ENCODE measurements at regions of chr6 and their contacts with region 1.

Region 1: GRCh38 chr6:26234421-26235296 is 130.3 kb upstream of the BTN3A2 start:
- DNase-seq: peak; percentile 49
- ATAC-seq: peak; percentile 77
- H3K4me3 Mint-ChIP-seq: peak overlapping the region; percentile 89
- H3K27ac Mint-ChIP-seq: peak overlapping the region; percentile 97
- H3K4me1 Mint-ChIP-seq: peaks cover 26% of the 10 kb centered on the region
- H3K27me3 Mint-ChIP-seq: no peaks in the 10 kb centered on the region
- CTCF ChIP-seq: no peak

Region 2: DNA sequence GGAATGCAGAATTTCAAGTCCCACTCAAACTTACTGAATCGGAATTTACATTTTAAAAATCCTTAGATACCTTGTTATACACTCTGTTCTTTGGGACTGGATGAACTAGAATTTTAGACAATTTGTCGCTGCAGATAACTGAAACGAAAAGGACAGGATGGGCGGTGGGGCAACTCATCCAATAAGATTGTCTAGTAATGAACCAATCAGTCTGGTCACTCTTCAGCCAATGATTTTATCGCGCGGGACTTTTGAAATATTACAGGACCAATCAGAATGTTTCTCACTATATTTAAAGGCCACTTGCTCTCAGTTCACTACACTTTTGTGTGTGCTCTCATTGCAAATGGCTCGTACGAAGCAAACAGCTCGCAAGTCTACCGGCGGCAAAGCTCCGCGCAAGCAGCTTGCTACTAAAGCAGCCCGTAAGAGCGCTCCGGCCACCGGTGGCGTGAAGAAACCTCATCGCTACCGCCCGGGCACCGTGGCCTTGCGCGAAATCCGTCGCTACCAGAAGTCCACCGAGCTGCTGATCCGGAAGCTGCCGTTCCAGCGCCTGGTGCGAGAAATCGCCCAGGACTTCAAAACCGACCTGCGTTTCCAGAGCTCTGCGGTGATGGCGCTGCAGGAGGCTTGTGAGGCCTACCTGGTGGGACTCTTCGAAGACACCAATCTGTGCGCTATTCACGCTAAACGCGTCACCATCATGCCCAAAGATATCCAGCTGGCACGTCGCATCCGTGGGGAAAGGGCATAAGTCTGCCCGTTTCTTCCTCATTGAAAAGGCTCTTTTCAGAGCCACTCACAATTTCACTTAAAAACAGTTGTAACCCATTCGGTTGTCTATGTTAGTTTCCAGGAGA is 189.4 kb before region 1 on chr6:
- CTCF ChIA-PET with region 1: no interaction called
- POLR2A ChIA-PET with region 1: interaction called, 29 read pairs
- intact Hi-C with region 1: no loop called
- DNase-seq: peak; percentile 51
- ATAC-seq: peak; percentile 58
- H3K4me3 Mint-ChIP-seq: peak overlapping the region; percentile 91
- H3K27ac Mint-ChIP-seq: peak overlapping the region; percentile 99
- H3K4me1 Mint-ChIP-seq: peaks cover 24% of the 10 kb centered on the region
- H3K27me3 Mint-ChIP-seq: no peaks in the 10 kb centered on the region
- CTCF ChIP-seq: no peak

Region 3: GRCh38 chr6:26175428-26176181 is 59.1 kb before region 1 on chr6:
- CTCF ChIA-PET with region 1: no interaction called
- POLR2A ChIA-PET with region 1: interaction called, 37 read pairs
- intact Hi-C with region 1: no loop called
- DNase-seq: no peak
- ATAC-seq: no peak
- H3K4me3 Mint-ChIP-seq: no peak overlapping the region
- H3K27ac Mint-ChIP-seq: peak overlapping the region; percentile 65
- H3K4me1 Mint-ChIP-seq: peaks cover 38% of the 10 kb centered on the region
- H3K27me3 Mint-ChIP-seq: no peaks in the 10 kb centered on the region
- CTCF ChIP-seq: no peak

Region 4: GRCh38 chr6:26223650-26224546 is 10.8 kb before region 1 on chr6:
- CTCF ChIA-PET with region 1: interaction called, 3 read pairs
- POLR2A ChIA-PET with region 1: interaction called, 161 read pairs
- intact Hi-C with region 1: loop called (anchors 1 kb)
- DNase-seq: no peak
- ATAC-seq: peak; percentile 87
- H3K4me3 Mint-ChIP-seq: no peak overlapping the region
- H3K27ac Mint-ChIP-seq: no peak overlapping the region
- H3K4me1 Mint-ChIP-seq: peaks cover 4% of the 10 kb centered on the region
- H3K27me3 Mint-ChIP-seq: no peaks in the 10 kb centered on the region
- CTCF ChIP-seq: no peak

Region 5: GRCh38 chr6:26445934-26446667 is 211.4 kb after region 1 on chr6:
- CTCF ChIA-PET with region 1: no interaction called
- POLR2A ChIA-PET with region 1: no interaction called
- intact Hi-C with region 1: no loop called
- DNase-seq: no peak
- ATAC-seq: no peak
- H3K4me3 Mint-ChIP-seq: no peak overlapping the region
- H3K27ac Mint-ChIP-seq: peak overlapping the region; percentile 53
- H3K4me1 Mint-ChIP-seq: peaks cover 43% of the 10 kb centered on the region
- H3K27me3 Mint-ChIP-seq: no peaks in the 10 kb centered on the region
- CTCF ChIP-seq: no peak

Region 6: GRCh38 chr6:26537846-26538571 is 303.4 kb after region 1 on chr6 and contains the start of gene HMGN4:
- CTCF ChIA-PET with region 1: no interaction called
- POLR2A ChIA-PET with region 1: interaction called, 17 read pairs
- intact Hi-C with region 1: no loop called
- DNase-seq: peak; percentile 73
- ATAC-seq: peak; percentile 67
- H3K4me3 Mint-ChIP-seq: peak within 1 kb of the TSS; percentile 98
- H3K27ac Mint-ChIP-seq: peak within 1 kb of the TSS; percentile 97
- H3K4me1 Mint-ChIP-seq: peaks cover 65% of the 10 kb centered on the region
- H3K27me3 Mint-ChIP-seq: peaks cover 7% of the 10 kb centered on the region
- CTCF ChIP-seq: no peak
- total RNA-seq, gene HMGN4: 74.5 and 82.2 TPM in 2 replicates

Region 7: DNA sequence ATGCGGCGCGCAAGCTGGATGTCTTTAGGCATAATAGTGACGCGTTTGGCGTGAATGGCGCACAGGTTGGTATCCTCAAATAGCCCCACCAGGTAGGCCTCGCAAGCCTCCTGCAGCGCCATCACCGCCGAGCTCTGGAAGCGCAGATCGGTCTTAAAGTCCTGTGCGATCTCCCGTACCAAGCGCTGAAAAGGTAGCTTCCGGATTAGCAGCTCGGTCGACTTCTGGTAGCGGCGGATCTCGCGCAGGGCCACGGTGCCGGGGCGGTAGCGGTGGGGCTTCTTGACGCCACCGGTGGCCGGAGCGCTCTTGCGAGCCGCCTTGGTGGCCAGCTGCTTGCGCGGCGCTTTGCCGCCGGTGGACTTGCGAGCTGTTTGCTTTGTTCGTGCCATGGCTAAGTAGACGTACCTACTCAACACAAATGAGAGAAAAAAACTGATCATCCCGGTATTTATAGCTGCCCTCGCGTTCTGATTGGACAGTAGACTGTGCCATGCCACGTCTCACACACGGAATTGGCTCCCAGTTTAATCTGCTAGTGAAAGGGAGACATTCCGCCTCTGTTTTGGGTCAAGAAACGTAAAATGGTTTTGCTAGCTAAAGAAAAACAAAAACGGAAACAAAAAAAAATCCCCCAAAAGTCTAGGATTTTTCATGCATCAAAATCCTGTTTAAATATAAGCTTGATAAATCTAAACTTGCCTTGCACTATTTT is 1637.4 kb after region 1 on chr6:
- CTCF ChIA-PET with region 1: no interaction called
- POLR2A ChIA-PET with region 1: interaction called, 17 read pairs
- intact Hi-C with region 1: no loop called
- DNase-seq: peak; percentile 73
- ATAC-seq: peak; percentile 80
- H3K4me3 Mint-ChIP-seq: peak overlapping the region; percentile 94
- H3K27ac Mint-ChIP-seq: peak overlapping the region; percentile 95
- H3K4me1 Mint-ChIP-seq: peaks cover 36% of the 10 kb centered on the region
- H3K27me3 Mint-ChIP-seq: no peaks in the 10 kb centered on the region
- CTCF ChIP-seq: no peak

Measured in activated B cell treated with CpG ODN at 0.5 μM for 24 hours (primary cell).